ENCODE measurements at regions of chr3 and their contacts with region 1.

Region 1: GRCh38 chr3:24004171-24004938 is 59.3 kb downstream of the NR1D2 start:
- DNase-seq: no peak
- ATAC-seq: no peak
- H3K4me3 ChIP-seq: no peak overlapping the region
- H3K27ac ChIP-seq: no peak overlapping the region
- H3K4me1 ChIP-seq: peaks cover 0 to 3% of the 10 kb centered on the region in 2 donors
- H3K27me3 ChIP-seq: no peaks in the 10 kb centered on the region

Region 2: GRCh38 chr3:24023197-24023596 is 18.8 kb after region 1 on chr3:
- intact Hi-C with region 1: no loop called
- DNase-seq: no peak
- ATAC-seq: no peak
- H3K4me3 ChIP-seq: no peak overlapping the region
- H3K27ac ChIP-seq: no peak overlapping the region
- H3K4me1 ChIP-seq: no peaks in the 10 kb centered on the region
- H3K27me3 ChIP-seq: no peaks in the 10 kb centered on the region

Region 3: GRCh38 chr3:24042174-24043059 is 38.1 kb after region 1 on chr3:
- intact Hi-C with region 1: loop called in 1 of 2 experiments (anchors 5 kb)
- DNase-seq: no peak
- ATAC-seq: peak; percentile 85
- H3K4me3 ChIP-seq: peak overlapping the region in 1 of 2 donors; percentile 26
- H3K27ac ChIP-seq: peak overlapping the region; percentile 24 to 98
- H3K4me1 ChIP-seq: peaks cover 3 to 7% of the 10 kb centered on the region in 2 donors
- H3K27me3 ChIP-seq: no peaks in the 10 kb centered on the region

Region 4: DNA sequence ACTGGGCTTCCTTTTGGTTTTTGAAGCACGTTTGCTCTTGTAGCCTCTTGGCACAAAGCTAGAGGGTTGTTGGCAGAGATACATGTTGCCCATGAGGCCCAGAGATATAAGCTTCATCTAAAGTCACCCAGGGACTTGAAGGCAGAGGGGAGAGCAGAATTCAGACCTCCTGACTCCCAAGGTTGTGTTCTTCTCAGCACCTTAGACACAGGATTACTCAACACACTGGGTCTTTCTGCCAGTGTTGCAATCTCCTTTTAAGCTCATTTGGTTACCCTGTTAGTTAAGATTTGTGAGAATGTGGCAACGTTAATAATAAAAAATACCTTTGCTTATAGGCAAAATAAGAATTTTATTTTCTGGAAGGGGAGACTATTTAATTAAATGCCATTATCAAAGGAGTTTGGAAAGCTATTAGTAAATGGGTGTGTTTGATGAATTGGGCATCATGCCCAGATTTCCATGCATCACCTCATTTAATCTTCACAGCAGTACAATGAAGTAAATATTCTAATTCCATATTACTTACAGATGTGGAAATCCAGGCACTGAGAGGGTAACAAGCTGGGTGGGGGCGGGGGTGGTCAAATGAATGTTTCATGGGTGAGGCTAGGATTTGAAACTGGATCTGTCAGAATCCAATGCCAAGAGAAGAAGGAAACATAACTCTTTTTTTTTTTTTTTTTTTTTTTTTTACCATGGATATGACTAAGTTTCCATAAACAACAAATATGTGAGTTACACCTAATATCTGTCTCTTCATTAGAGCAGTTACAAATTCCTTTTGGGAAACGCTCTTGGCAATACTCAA is 124.0 kb after region 1 on chr3:
- intact Hi-C with region 1: loop called in 1 of 2 experiments (anchors 10 kb)
- DNase-seq: no peak
- ATAC-seq: no peak
- H3K4me3 ChIP-seq: no peak overlapping the region
- H3K27ac ChIP-seq: peak overlapping the region in 1 of 2 donors; percentile 77
- H3K4me1 ChIP-seq: peaks cover 0 to 3% of the 10 kb centered on the region in 2 donors
- H3K27me3 ChIP-seq: no peaks in the 10 kb centered on the region